ENCODE measurements at regions of chr2 and their contacts with region 1.

Region 1: GRCh38 chr2:73926493-73927338 is at the start of gene DGUOK:
- DNase-seq: peak; percentile 99
- H3K4me3 ChIP-seq: peak within 1 kb of the TSS; percentile 50 to 82 (median 66)
- H3K27ac ChIP-seq: peak within 1 kb of the TSS; percentile 94 to 99 (median 96)
- H3K4me1 ChIP-seq: peaks cover 29 to 60% (median 54%) of the 10 kb centered on the region in 6 donors
- H3K27me3 ChIP-seq: no peaks in the 10 kb centered on the region
- CTCF ChIP-seq: peak in 4 of 11 experiments; percentile 18 to 49 (median 36)
- POLR2A ChIP-seq: peak; percentile 77 to 84 (median 83)
- total RNA-seq, gene DGUOK: 41.3 to 85.4 (median 52.0) TPM

Region 2: GRCh38 chr2:73984203-73984921 is 57.6 kb after region 1 on chr2 and contains the start of gene TET3:
- intact Hi-C with region 1: loop called (anchors 5 kb)
- DNase-seq: peak; percentile 95
- H3K4me3 ChIP-seq: peak within 1 kb of the TSS; percentile 50 to 75 (median 64)
- H3K27ac ChIP-seq: peak within 1 kb of the TSS; percentile 40 to 93 (median 86)
- H3K4me1 ChIP-seq: peaks cover 44 to 91% (median 84%) of the 10 kb centered on the region in 6 donors
- H3K27me3 ChIP-seq: peaks cover 0 to 13% (median 0%) of the 10 kb centered on the region in 7 donors
- CTCF ChIP-seq: no peak
- POLR2A ChIP-seq: no peak
- total RNA-seq, gene TET3: 18.9 to 27.6 (median 24.0) TPM